ENCODE measurements at regions of chr3 and their contacts with region 1.

Region 1: DNA sequence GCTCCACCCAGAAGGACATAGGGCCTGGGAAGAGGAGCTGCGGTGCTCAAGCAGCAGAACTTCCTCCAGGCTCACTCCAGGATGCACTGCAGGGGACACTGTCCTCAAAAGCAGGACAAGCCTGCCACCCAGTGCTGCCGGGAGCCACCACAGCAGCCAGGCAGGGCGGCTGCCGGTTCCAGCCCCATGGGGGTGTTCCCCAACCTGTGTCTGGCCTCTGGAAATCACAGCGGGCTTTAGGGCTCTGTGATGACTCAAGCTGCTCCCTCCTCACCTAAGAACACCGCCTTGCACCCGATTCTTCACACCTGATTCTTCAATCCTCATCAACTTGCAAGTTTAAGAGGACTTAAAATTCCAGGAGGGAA is 71.9 kb upstream of the SLC6A11 start:
- DNase-seq: no peak
- H3K4me3 ChIP-seq: no peak overlapping the region
- H3K27ac ChIP-seq: no peak overlapping the region
- H3K4me1 ChIP-seq: no peaks in the 10 kb centered on the region
- H3K27me3 ChIP-seq: no peaks in the 10 kb centered on the region
- CTCF ChIP-seq: peak in 1 of 2 donors; percentile 17

Region 2: DNA sequence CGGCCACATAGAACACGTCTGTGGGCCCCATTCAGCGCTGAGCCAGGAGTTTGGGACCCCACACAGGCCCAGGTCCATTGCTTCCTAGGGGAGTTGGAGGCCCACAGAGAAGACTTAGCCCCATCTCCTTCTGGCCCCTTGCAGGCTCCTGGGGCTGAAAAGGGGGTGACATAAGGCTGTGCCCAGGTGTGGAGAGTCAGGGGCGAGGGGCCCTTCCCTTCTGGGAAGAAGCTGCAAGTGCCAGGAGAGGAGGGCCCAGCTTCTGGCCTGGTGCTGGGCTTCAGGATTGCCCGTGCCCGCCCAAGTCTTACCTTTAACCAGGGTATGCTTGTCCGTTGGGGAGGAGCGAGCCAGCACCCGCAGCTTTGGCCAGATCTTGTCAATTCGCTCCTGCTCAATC is 394.3 kb before region 1 on chr3:
- CTCF ChIA-PET with region 1: no interaction called
- dilution Hi-C with region 1: loop called (anchors 5 kb)
- in situ Hi-C with region 1: loop called in 1 of 2 experiments (anchors 10 kb)
- intact Hi-C with region 1: no loop called
- DNase-seq: no peak
- H3K4me3 ChIP-seq: no peak overlapping the region
- H3K27ac ChIP-seq: no peak overlapping the region
- H3K4me1 ChIP-seq: no peaks in the 10 kb centered on the region
- H3K27me3 ChIP-seq: no peaks in the 10 kb centered on the region
- CTCF ChIP-seq: no peak

Region 3: DNA sequence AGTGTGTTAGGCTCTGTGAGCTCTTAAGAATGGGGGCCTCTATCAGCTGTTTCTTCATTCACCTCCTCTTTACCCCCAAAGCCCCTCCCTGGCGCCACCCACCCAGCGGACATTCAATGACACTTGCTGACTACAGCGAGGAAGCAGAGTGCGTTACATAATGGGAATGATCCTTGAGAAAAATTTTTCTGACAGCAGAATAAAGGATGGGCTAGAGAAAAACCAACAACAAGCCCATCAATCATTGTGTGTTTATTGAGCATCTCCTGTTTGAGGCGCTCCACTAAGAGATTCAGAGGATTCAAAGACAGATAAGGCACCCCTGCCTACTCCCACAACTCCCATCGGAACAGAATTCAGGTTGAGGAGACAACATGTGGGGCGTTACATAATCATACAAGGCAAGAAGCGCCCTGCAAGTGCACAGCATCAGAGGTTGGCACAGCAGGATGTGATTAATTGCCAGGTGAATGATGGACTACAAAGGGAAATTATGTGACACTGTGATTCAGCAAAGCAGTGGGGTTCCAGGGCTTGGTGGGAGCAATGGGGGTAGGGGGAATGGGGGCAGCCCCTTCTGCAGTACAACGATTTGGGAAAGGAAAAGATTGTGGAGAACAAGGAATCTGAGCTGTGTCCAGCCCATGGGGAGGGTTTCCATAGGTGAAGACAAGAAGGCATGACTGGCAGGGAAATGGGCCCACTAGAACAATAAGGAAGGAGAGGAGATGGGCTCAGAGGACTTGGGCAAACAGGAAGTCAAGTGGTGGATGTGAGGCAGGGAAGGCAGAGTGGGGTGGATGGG is 97.3 kb before region 1 on chr3:
- CTCF ChIA-PET with region 1: no interaction called
- dilution Hi-C with region 1: loop called (anchors 5 kb)
- in situ Hi-C with region 1: no loop called
- intact Hi-C with region 1: no loop called
- DNase-seq: no peak
- H3K4me3 ChIP-seq: no peak overlapping the region
- H3K27ac ChIP-seq: no peak overlapping the region
- H3K4me1 ChIP-seq: no peaks in the 10 kb centered on the region
- H3K27me3 ChIP-seq: peaks cover 2% of the 10 kb centered on the region
- CTCF ChIP-seq: no peak

Region 4: DNA sequence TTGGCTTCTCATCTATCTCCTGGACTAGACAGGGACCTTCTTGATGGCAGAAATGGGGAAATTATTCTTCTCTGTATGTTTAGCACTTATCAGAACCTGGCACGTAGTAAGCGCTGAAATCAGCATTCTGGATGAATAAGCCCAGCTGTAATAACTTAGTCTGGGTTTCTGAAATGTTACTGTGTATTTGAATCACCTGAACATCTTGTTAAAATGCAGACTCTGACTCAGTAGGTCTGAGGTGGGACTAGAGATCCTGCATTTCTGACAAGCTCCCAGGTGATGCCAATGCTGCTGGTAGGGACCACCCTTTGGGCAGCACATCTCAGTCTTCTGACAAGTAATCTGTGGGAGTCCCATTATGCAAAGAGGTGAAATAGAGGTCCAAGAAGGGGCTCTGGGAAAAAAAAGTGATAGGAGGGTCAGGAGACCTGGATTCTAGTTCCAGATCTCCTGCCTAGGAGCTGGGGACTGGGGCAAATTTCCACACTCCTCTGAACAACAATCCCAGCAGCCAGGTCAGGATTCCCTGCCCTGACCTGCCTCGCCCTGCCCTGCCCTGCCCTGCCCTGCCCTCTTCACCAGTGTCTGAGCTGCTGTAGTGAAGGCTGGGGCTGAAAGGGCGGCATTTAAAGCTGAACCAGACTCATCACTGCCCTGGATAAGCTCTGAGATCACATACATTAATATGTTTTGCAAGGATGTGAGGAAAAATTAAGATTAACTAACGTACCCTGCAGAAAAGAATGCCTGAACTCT is 54.7 kb after region 1 on chr3:
- CTCF ChIA-PET with region 1: no interaction called
- dilution Hi-C with region 1: no loop called
- in situ Hi-C with region 1: no loop called
- intact Hi-C with region 1: no loop called
- DNase-seq: peak; percentile 66
- H3K4me3 ChIP-seq: no peak overlapping the region
- H3K27ac ChIP-seq: peak overlapping the region; percentile 49
- H3K4me1 ChIP-seq: peaks cover 38% of the 10 kb centered on the region
- H3K27me3 ChIP-seq: no peaks in the 10 kb centered on the region
- CTCF ChIP-seq: no peak

Measured in mammary epithelial cell (primary cell).